Head of caudate nucleus (tissue), 42 donors: ENCODE measurements at regions of chr16 and their contacts with region 1.

Region 1: DNA sequence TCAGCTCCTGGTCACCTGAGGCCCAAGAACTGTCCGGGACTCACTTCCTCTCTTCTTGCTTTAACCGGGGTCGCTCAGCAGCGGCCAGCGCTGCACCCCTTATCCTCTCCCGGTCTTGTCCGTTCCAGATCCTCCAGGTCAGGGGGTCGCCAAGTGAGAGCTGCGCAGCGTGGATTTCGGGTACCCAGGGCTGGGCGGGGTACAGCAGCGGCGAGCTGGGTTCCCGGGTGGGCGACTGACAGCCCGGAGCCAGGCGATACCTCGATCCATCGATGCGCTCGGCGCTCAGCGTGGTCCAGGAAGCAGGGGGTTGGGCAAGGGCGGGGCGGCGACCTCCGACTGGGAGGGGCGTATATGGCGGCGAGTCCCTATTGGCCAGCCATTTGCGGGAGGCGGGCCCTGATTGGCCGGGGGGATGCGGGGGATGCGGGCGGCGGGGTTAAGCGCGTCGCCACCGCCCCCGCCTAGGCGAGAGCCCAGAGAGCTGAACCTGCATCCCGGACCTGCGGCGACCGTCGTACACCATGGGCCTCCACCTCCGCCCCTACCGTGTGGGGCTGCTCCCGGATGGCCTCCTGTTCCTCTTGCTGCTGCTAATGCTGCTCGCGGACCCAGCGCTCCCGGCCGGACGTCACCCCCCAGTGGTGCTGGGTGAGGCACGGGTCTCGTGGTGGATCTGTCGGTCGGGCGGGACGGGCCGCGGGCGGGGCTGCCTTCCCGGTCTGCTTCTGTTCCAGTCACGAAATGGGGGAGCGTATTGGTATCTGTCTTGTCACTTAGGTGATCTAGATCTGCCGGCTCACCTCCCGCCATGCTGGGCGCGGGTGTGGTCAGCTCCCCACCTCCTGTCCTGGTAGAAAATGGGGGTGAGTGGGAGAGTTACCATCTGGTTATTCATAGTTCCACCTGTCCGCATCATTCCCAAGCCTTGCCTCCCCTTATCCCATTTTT is at the start of gene PLA2G15:
- DNase-seq: peak; percentile 88 to 99 (median 97)

Region 2: DNA sequence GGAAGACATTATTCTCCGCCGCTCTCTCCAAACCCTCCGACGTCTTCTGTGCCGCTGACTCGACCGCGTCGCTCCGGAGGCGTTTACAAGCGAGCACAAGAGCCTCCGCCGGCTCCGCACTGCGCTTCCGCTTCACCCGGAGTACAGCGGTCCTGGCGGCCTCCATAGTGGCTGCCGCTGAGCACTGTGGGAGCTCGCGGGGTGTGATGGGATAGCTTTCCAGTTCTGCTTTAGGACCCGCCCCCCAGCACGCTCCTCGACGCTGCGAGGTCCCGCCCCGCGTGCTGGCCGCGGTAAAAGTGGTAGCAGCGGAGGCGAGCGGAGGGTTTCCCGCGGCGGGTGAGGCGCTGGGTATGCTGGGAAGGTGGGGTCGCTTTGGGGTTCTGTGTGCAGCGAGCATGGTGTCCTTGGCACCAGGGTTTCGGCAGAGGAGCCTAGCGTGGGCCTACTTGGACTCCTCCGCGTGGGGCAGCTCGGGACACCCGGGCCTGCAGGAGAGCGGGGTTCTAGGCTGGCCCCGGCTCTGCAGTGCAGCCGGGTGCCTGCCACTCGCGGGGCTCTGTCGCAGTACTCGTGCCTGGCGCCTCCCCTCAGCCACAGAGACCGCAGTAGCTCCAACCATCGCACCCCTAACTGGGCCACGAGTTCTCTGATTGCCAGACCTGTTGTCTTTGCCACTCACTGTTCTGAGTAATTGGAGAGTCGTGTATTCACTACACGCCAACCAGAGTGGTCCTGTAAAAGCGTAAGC is 65.8 kb after region 1 on chr16 and contains the starts of genes PRMT7 and SLC7A6OS:
- intact Hi-C with region 1: loop called (anchors 5 kb)
- DNase-seq: peak; percentile 87 to 98 (median 94)

Region 3: DNA sequence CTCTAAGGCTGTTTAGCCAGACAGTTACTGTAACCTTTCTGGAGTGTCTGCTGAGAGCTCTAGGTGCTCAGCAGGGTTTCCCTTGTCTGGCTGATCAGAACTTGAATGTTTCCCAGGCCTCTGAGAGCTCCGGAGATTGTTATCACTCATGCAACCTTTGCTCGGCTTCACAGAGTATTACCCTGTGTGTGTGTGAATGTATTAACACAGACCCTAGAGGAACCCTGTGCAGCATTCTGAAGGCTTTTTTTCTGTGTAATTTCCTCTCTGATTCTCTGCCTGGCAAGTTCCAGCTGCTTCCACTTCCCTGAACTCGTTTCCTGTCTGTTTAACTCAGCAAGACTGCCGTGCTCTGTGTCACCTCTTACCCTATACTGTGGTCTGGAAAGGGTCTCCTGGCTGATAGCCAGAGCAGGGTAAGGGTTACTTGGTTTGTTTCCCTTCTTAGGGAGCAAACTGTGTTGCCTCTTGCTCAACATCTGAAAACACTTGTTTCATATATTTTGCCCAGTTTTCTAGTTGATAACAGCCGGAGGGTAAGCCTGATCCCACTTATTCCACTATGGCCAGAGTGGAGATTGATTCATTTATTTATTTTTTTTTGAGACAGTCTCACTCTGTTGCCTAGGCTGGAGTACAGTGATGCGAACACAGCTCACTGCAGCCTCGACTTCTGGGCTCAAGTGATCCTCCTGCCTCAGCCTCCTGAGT is 87.4 kb after region 1 on chr16:
- intact Hi-C with region 1: loop called (anchors 5 kb)
- DNase-seq: peak in 18 of 42 donors; percentile 22 to 59 (median 43)